Dorsolateral prefrontal cortex (tissue), 120 donors: ENCODE measurements at regions of chr2 and their contacts with region 1.

Region 1: GRCh38 chr2:178193823-178194599 is at the start of gene OSBPL6:
- DNase-seq: peak; percentile 44 to 90 (median 78)
- H3K4me3 ChIP-seq: peak within 1 kb of the TSS; percentile 64 to 96 (median 88)
- H3K27ac ChIP-seq: peak within 1 kb of the TSS in 58 of 59 donors; percentile 23 to 97 (median 86)
- H3K27me3 ChIP-seq: no peaks in the 10 kb centered on the region
- CTCF ChIP-seq: peak in 29 of 56 donors; percentile 1 to 57 (median 33)
- total RNA-seq, gene OSBPL6: 15.7 to 49.5 (median 36.0) TPM

Region 2: GRCh38 chr2:178280244-178280852 is 86.3 kb after region 1 on chr2:
- intact Hi-C with region 1: loop called (anchors 2 to 10 kb)
- DNase-seq: no peak
- H3K4me3 ChIP-seq: no peak overlapping the region
- H3K27ac ChIP-seq: no peak overlapping the region
- H3K27me3 ChIP-seq: no peaks in the 10 kb centered on the region
- CTCF ChIP-seq: peak; percentile 62 to 86 (median 76)

Region 3: DNA sequence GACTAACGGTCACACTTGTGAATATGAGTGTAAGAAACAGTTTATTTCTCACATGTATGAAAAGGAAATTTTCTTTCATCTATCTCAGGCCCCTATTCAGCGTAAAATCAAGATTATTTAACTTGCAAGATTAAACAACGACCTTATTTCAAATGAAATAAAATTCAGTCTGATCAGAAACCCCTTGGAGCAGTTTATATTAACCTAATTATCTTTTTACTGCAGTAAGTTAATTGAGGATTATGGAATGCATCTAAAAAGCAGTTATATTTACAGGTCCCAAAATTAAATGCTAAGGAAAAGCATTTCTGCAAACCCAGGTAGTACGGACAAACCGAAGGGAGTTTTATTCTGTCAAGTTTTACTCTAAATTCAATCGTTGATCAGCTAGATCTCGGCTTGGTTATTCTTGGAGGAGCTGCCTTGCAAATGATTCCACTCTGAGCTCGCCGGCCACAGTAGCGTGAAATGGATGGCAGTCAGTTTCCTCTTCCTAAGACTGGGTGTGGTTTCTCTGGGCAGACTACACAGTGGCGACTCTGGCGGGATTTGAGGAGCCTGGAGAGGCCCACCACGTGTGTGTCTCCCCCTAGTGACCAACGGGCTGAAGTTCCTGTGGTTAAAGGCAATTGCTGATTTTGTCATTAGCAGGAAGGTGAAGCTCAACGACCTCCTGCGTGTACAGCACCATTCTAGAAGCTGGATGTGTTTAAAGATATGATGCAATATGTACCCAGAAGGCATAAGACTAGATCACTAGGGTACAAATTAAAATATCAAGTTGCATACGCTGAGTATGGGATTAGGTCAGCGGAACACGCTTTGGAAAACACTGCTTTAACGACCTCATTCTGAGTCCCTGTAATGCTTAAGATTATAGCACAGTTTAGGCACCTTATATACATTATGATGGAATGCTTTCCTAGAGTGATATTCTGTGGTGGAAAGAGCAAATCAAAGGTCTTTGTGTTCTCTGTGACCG is 220.5 kb after region 1 on chr2:
- intact Hi-C with region 1: loop called (anchors 5 to 10 kb)
- DNase-seq: peak; percentile 61 to 89 (median 84)
- H3K4me3 ChIP-seq: peak overlapping the region; percentile 58 to 88 (median 72)
- H3K27ac ChIP-seq: peak overlapping the region in 53 of 59 donors; percentile 35 to 95 (median 87)
- H3K27me3 ChIP-seq: no peaks in the 10 kb centered on the region
- CTCF ChIP-seq: peak; percentile 75 to 94 (median 88)

Region 4: GRCh38 chr2:178478439-178479274 is 284.6 kb after region 1 on chr2 and contains the start of gene FKBP7:
- intact Hi-C with region 1: loop called in 1 of 2 experiments (anchors 10 kb)
- DNase-seq: peak; percentile 87 to 92 (median 90)
- H3K4me3 ChIP-seq: peak within 1 kb of the TSS; percentile 51 to 94 (median 78)
- H3K27ac ChIP-seq: peak within 1 kb of the TSS; percentile 83 to 100 (median 98)
- H3K27me3 ChIP-seq: no peaks in the 10 kb centered on the region
- CTCF ChIP-seq: peak in 55 of 56 donors; percentile 23 to 74 (median 55)
- total RNA-seq, gene FKBP7: 0.76 to 7.8 (median 3.0) TPM